ENCODE measurements at regions of chr7 and their contacts with region 1.

Region 1: GRCh38 chr7:100691676-100692577 is 2.1 kb downstream of the GIGYF1 start:
- DNase-seq: peak; percentile 95
- H3K4me3 Mint-ChIP-seq: peak overlapping the region; percentile 95
- H3K27ac Mint-ChIP-seq: peak overlapping the region; percentile 57
- H3K4me1 Mint-ChIP-seq: peaks cover 28% of the 10 kb centered on the region
- H3K27me3 Mint-ChIP-seq: peaks cover 9% of the 10 kb centered on the region

Region 2: GRCh38 chr7:100271716-100272537 is 420.0 kb before region 1 on chr7:
- intact Hi-C with region 1: no loop called
- DNase-seq: peak; percentile 99
- H3K4me3 Mint-ChIP-seq: peak overlapping the region; percentile 77
- H3K27ac Mint-ChIP-seq: peak overlapping the region; percentile 51
- H3K4me1 Mint-ChIP-seq: peaks cover 20% of the 10 kb centered on the region
- H3K27me3 Mint-ChIP-seq: no peaks in the 10 kb centered on the region

Region 3: GRCh38 chr7:100478966-100479665 is 212.8 kb before region 1 on chr7 and contains the start of gene TSC22D4:
- intact Hi-C with region 1: loop called (anchors 5 kb)
- DNase-seq: peak; percentile 96
- H3K4me3 Mint-ChIP-seq: peak within 1 kb of the TSS; percentile 92
- H3K27ac Mint-ChIP-seq: peak within 1 kb of the TSS; percentile 88
- H3K4me1 Mint-ChIP-seq: peaks cover 35% of the 10 kb centered on the region
- H3K27me3 Mint-ChIP-seq: no peaks in the 10 kb centered on the region
- total RNA-seq, gene TSC22D4: 113 and 121 TPM in 2 replicates

Region 4: GRCh38 chr7:100563809-100564400 is 128.0 kb before region 1 on chr7:
- intact Hi-C with region 1: loop called (anchors 1 kb)
- DNase-seq: peak; percentile 95
- H3K4me3 Mint-ChIP-seq: no peak overlapping the region
- H3K27ac Mint-ChIP-seq: peak overlapping the region; percentile 3
- H3K4me1 Mint-ChIP-seq: peaks cover 23% of the 10 kb centered on the region
- H3K27me3 Mint-ChIP-seq: no peaks in the 10 kb centered on the region

Region 5: DNA sequence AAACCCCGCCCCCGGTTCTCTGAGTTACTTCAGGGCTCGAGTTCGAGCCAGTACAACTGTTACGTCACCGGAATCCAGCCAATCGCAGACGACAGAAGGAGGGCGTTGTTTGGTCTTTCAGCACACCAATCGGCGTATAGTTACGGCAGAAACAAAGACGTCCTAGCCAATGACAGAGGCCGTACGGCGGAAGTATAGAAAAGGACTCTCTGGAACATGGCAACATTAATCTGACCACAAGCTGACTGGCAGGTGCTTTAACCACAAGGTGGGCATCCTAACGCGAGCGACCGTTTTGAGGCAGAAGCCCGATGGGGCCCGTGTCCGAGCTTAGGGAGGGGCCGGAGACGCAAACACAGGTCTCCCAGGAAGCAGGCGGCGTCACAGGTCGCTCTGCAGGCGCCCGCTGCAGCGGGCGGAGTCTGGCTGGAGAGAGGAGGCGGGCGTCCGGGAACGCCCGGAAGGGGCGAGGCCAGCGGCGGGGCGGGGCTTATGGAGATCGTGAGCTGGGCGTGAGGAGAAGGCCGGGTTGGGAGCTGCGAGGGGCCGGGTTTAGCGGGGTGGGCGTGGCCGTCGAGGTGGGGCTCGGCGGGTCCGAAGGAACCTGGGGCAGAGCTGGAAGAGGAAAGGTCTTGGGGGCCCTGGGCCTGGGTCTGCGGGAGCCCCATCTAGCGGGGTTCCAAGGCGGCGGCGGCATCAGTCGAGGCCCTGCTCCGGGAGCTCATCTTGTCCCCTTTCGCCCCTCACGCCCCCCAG is 79.8 kb before region 1 on chr7 and contains the start of gene MOSPD3:
- intact Hi-C with region 1: loop called (anchors 1 kb)
- DNase-seq: peak; percentile 100
- H3K4me3 Mint-ChIP-seq: peak within 1 kb of the TSS; percentile 97
- H3K27ac Mint-ChIP-seq: peak within 1 kb of the TSS; percentile 100
- H3K4me1 Mint-ChIP-seq: peaks cover 18% of the 10 kb centered on the region
- H3K27me3 Mint-ChIP-seq: peaks cover 9% of the 10 kb centered on the region
- total RNA-seq, gene MOSPD3: 11.3 and 12.1 TPM in 2 replicates

Region 6: DNA sequence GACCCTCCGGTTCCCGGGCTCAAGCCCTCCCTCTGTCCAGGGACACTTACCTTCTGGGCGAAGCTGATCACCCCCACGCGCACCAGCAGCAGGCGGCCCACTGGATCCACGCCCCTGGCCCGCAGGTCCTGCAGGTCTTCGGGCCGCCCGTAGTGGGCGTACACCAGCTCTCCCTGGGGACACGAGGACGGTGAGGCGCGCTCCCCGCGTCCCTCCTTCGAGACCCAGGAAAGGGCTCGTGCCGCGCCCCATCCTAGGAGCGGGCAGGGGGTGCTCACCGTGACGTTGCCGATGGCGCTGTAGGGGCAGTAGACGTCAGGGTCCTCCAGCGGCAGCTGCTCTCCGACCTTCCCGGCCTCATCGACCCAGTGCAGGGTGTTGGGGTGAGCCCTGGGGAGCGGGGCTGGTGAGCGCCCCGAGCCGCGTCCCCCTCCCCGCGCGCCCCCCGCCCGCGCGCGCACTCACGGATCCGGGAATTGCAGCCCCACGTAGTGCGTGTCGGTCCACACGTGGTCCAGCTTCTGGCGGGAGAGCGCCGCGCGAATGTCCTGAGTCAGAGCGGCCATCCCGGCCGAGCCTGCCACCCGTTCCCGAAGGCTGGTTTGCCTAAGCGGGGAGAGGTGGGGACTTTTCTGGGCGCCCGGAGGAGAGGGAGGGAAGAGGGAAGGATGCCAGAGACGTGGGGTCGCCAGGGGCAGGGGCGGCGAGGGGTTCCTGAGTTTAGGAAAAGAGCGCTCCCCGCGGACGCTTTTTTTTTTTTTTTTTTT is 58.8 kb before region 1 on chr7:
- intact Hi-C with region 1: loop called (anchors 1 kb)
- DNase-seq: peak; percentile 90
- H3K4me3 Mint-ChIP-seq: peak overlapping the region; percentile 92
- H3K27ac Mint-ChIP-seq: peak overlapping the region; percentile 98
- H3K4me1 Mint-ChIP-seq: peaks cover 32% of the 10 kb centered on the region
- H3K27me3 Mint-ChIP-seq: no peaks in the 10 kb centered on the region

Region 7: GRCh38 chr7:100673300-100673941 is 18.5 kb before region 1 on chr7 and contains the start of gene GNB2:
- intact Hi-C with region 1: loop called (anchors 1 kb)
- DNase-seq: peak; percentile 100
- H3K4me3 Mint-ChIP-seq: peak within 1 kb of the TSS; percentile 96
- H3K27ac Mint-ChIP-seq: peak within 1 kb of the TSS; percentile 94
- H3K4me1 Mint-ChIP-seq: peaks cover 12% of the 10 kb centered on the region
- H3K27me3 Mint-ChIP-seq: peaks cover 14% of the 10 kb centered on the region
- total RNA-seq, gene GNB2: 205 and 211 TPM in 2 replicates

Region 8: GRCh38 chr7:100705753-100706671 is 14.1 kb after region 1 on chr7 and contains the start of gene POP7:
- intact Hi-C with region 1: loop called (anchors 1 kb)
- DNase-seq: peak; percentile 100
- H3K4me3 Mint-ChIP-seq: peak within 1 kb of the TSS; percentile 99
- H3K27ac Mint-ChIP-seq: peak within 1 kb of the TSS; percentile 98
- H3K4me1 Mint-ChIP-seq: peaks cover 13% of the 10 kb centered on the region
- H3K27me3 Mint-ChIP-seq: peaks cover 7% of the 10 kb centered on the region
- total RNA-seq, gene POP7: 77.3 and 77.7 TPM in 2 replicates